ENCODE measurements at regions of chr4 and their contacts with region 1.

Region 1: GRCh38 chr4:124483115-124483898 is 229.2 kb downstream of the ANKRD50 start:
- DNase-seq: peak; percentile 43 to 55
- H3K4me3 ChIP-seq: no peak overlapping the region
- H3K4me3 Mint-ChIP-seq: peak overlapping the region; percentile 1
- H3K27ac Mint-ChIP-seq: peak overlapping the region; percentile 20
- H3K4me1 ChIP-seq: peaks cover 23% of the 10 kb centered on the region
- H3K4me1 Mint-ChIP-seq: peaks cover 9% of the 10 kb centered on the region
- H3K27me3 ChIP-seq: no peaks in the 10 kb centered on the region
- H3K27me3 Mint-ChIP-seq: no peaks in the 10 kb centered on the region
- CTCF ChIP-seq: no peak

Region 2: GRCh38 chr4:124530464-124531077 is 47.3 kb after region 1 on chr4:
- CTCF ChIA-PET with region 1: no interaction called
- POLR2A ChIA-PET with region 1: no interaction called
- intact Hi-C with region 1: loop called (anchors 1 kb)
- DNase-seq: peak; percentile 63 to 69
- H3K4me3 ChIP-seq: no peak overlapping the region
- H3K4me3 Mint-ChIP-seq: no peak overlapping the region
- H3K27ac Mint-ChIP-seq: peak overlapping the region; percentile 71
- H3K4me1 ChIP-seq: peaks cover 24% of the 10 kb centered on the region; the same call in 1 of the 2 replicates
- H3K4me1 Mint-ChIP-seq: peaks cover 6% of the 10 kb centered on the region
- H3K27me3 ChIP-seq: no peaks in the 10 kb centered on the region
- H3K27me3 Mint-ChIP-seq: no peaks in the 10 kb centered on the region
- CTCF ChIP-seq: no peak

Region 3: GRCh38 chr4:124753941-124754581 is 270.8 kb after region 1 on chr4:
- CTCF ChIA-PET with region 1: no interaction called
- POLR2A ChIA-PET with region 1: no interaction called
- intact Hi-C with region 1: no loop called
- DNase-seq: peak; percentile 36 to 37
- H3K4me3 ChIP-seq: no peak overlapping the region
- H3K4me3 Mint-ChIP-seq: no peak overlapping the region
- H3K27ac Mint-ChIP-seq: no peak overlapping the region
- H3K4me1 ChIP-seq: no peaks in the 10 kb centered on the region; the same call in 1 of the 2 replicates
- H3K4me1 Mint-ChIP-seq: peaks cover 9% of the 10 kb centered on the region
- H3K27me3 ChIP-seq: no peaks in the 10 kb centered on the region
- H3K27me3 Mint-ChIP-seq: no peaks in the 10 kb centered on the region
- CTCF ChIP-seq: no peak

Measured in Caco-2 (cell line).